ENCODE measurements at regions of chr5 and their contacts with region 1.

Region 1: GRCh38 chr5:6291961-6292360 is 86.4 kb downstream of the MED10 start:
- DNase-seq: no peak
- ATAC-seq: no peak

Region 2: DNA sequence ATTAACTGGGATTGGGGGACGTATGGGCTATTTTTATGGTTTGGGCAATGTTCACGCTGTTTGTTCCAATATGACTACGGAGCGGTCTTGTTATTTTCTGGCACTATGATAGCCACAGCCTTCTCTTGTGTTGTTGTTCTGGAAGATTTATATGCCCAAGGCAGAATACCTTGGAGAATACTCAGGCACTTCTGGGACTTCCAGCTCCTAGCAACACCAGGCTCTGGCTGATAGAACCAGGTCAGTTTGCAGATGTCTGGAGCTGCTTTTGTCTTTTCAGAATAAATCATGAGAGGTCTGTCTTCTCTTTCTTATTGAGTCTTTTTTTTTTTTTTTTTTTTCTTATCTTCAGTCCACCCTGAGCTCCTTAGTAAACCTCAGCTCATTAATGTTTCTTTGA is 176.1 kb before region 1 on chr5:
- intact Hi-C with region 1: no loop called
- DNase-seq: no peak
- ATAC-seq: no peak

Region 3: DNA sequence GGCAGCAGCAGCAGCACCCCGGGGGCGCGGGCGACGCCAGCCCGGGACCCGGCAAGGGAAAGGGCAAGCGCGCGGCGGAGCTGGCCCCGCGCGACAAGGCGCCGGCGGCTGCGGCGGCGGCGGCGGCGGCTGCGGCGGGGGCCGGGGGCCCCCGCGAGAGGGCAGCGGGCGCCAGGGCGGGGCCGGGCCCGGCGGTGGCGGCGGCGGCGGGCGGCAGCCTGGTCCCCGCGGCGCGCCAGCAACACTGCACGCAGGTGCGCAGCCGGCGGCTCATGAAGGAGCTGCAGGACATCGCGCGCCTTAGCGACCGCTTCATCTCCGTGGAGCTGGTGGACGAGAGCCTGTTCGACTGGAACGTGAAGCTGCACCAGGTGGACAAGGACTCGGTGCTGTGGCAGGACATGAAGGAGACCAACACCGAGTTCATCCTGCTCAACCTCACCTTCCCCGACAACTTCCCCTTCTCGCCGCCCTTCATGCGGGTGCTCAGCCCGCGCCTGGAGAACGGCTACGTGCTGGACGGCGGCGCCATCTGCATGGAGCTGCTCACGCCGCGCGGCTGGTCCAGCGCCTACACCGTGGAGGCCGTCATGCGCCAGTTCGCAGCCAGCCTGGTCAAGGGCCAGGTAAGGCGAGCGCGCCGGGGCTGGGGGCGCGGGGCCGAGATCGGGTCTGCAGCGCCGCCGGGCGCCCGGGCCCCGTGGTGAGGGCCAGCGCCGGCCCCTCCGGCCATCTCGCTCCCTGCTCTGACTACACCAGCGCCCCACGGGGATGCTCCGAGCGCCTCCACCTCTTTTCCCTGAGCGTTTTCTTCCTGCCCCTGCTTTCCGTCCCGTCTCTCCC is 156.9 kb after region 1 on chr5 and contains the start of gene UBE2QL1:
- intact Hi-C with region 1: loop called (anchors 5 kb)
- DNase-seq: no peak
- ATAC-seq: peak; percentile 43
- total RNA-seq, gene UBE2QL1: 21.9 TPM

Region 4: DNA sequence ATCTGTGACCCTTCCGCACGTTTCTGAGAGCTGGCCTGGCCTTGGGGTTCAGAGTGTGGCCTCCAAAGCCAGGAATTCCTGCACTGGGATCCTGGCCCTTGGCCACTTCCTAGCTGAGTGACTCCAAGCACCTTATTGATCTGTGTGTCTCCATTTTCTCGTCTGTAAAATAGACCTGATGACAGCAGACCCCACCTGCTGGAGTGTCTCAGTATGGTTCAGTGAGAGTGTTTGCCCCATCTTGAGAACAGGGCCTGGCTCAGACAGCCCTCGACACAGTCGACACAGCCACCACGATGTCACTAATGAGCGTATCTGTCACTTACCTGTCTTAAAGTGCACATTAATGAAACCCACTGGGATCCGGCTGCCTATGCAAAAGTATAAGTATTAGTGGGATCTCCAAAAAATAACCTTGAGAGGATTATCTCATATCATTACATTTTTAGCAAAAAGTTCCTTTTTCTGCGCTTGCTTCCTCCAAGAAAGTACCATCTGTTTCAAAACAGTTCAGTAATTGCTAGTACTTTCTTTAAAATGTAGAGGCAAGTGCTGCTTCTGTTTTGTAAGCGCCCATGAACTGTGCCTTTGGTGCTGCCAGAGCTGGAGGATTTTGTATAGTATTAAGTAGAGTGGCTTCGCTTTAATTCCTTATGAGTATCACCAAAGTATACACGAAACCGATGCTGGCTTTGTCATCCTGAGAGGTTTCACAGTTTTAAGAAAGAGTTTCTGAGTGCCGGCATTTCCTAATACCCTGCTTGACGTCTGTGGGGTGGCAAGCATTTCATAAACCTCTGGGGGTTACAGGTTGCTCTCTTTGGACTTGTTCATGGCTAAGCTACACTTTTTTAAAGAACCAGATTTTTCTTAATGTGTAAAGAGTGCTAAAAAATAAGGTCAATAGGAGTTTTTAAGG is 188.4 kb after region 1 on chr5:
- intact Hi-C with region 1: no loop called
- DNase-seq: no peak
- ATAC-seq: no peak

Region 5: GRCh38 chr5:6525910-6526309 is 233.9 kb after region 1 on chr5:
- intact Hi-C with region 1: loop called (anchors 10 kb)
- DNase-seq: no peak
- ATAC-seq: peak; percentile 61

Measured in Right ventricle myocardium inferior (tissue), 1 donor.